Heart left ventricle (tissue), 16 donors: ENCODE measurements at regions of chr1 and their contacts with region 1.

Region 1: GRCh38 chr1:6784560-6785317 is 515 bp upstream of the CAMTA1 start:
- DNase-seq: peak; percentile 99 to 100 (median 100)
- ATAC-seq: peak; percentile 91 to 97 (median 96)
- H3K4me3 ChIP-seq: peak overlapping the region; percentile 29 to 96 (median 76)
- H3K27ac ChIP-seq: peak overlapping the region; percentile 91 to 100 (median 99)
- H3K4me1 ChIP-seq: peaks cover 3 to 50% (median 34%) of the 10 kb centered on the region in 12 donors
- H3K27me3 ChIP-seq: no peaks in the 10 kb centered on the region
- CTCF ChIP-seq: no peak
- POLR2A ChIP-seq: peak; percentile 22 to 66

Region 2: GRCh38 chr1:6613361-6614018 is 171.2 kb before region 1 on chr1 and contains the start of gene PHF13:
- intact Hi-C with region 1: loop called in 1 of 10 experiments (anchors 5 kb)
- DNase-seq: peak; percentile 99 to 100 (median 100)
- ATAC-seq: peak; percentile 96 to 100 (median 99)
- H3K4me3 ChIP-seq: peak within 1 kb of the TSS; percentile 68 to 100 (median 96)
- H3K27ac ChIP-seq: peak within 1 kb of the TSS; percentile 90 to 99 (median 98)
- H3K4me1 ChIP-seq: peaks cover 0 to 41% (median 20%) of the 10 kb centered on the region in 12 donors
- H3K27me3 ChIP-seq: no peaks in the 10 kb centered on the region
- CTCF ChIP-seq: peak in 1 of 12 donors; percentile 5
- POLR2A ChIP-seq: peak in 1 of 2 donors; percentile 49
- total RNA-seq, gene PHF13: 3.5 to 11.2 (median 7.9) TPM

Region 3: DNA sequence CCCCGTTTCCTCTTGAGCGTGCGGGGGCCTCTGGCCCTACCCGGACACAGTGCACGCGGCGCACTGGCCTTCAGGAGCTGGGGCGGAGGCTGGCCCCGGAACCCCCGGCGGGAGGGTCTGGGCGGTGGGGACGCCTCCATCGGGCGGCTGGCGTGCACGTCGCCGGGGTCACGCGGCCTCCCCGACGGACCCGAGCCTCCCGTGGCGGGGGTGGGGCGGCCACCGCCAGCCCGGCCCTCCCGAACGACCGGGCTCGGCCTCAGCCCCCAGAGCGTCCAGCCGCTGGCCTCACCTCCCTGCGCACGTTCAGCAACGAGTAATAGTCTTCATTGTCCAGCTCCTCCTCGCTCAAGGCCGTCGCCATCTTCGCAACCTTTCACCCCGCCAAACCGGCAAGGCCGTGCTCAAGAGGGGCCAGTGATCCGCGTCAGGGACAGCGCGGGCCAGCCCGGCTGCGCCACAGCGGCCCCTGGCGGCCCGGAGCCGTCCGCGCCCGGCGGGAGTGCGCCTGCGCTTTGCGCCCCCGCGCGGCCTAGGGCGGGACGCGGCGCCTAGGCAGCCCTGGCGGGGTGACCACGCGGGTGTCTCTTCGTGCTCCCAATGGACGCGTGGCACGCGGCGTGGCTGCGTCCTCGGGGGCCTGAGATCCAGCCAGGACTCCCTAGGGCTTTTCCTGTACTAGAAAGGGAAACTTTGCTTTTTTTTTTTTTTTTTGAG is 83.1 kb before region 1 on chr1 and contains the start of gene DNAJC11:
- intact Hi-C with region 1: loop called in 1 of 10 experiments (anchors 2 kb)
- DNase-seq: peak; percentile 90 to 95 (median 92)
- ATAC-seq: peak; percentile 89 to 98 (median 95)
- H3K4me3 ChIP-seq: peak within 1 kb of the TSS; percentile 68 to 100 (median 94)
- H3K27ac ChIP-seq: peak within 1 kb of the TSS; percentile 70 to 92 (median 87)
- H3K4me1 ChIP-seq: peaks cover 5 to 29% (median 19%) of the 10 kb centered on the region in 12 donors
- H3K27me3 ChIP-seq: no peaks in the 10 kb centered on the region
- CTCF ChIP-seq: peak; percentile 60 to 100 (median 93)
- POLR2A ChIP-seq: peak in 1 of 2 donors; percentile 34
- total RNA-seq, gene DNAJC11: 42.4 to 67.4 (median 61.2) TPM

Region 4: DNA sequence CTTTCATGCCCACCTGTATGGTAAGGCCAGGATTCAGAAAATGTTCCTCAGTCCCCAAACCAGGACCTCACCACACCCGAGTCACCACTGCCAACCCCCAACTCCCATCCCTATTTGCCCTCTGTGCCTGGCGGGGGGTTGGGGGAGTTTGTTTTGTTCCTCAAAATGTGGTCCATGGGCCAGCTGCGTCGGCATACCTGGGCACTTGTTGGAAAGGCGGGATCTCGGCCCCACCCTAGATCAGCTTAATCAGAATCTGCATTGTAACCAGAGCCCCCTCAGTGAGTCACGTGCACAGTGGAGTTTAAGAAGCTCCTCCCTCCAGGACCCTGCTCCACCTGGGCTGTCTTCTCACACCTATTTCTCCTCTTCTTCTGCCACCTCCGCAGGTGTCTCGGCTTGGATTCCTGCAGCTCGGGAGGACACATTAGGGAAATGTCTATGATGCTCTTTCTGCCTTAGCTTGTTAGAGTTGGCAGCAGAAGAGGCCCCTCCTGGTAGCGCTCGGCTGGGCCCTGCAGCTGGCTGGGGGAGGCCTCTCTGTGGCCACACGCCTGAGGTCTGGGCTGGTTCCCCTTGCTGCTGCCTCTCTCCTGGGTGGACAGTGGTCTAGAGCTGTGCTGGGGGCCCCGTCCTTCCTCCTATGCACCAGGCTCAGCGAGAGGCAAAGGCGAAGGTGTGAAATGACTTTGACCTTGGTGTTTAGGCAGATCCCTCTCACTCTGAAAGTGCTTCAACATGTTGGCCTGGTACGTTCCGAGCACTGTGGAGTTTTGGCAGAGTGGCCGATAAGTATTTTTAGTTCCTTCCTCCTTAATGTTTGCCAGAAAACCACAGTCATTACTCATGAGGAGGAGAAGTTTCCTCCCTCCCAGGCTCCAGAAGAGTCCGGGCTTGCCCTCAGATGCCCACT is 41.3 kb before region 1 on chr1:
- intact Hi-C with region 1: loop called in 2 of 10 experiments (anchors 2 to 5 kb)
- DNase-seq: peak; percentile 57 to 72 (median 63)
- ATAC-seq: peak; percentile 92 to 96 (median 95)
- H3K4me3 ChIP-seq: peak overlapping the region in 5 of 12 donors; percentile 3 to 28 (median 22)
- H3K27ac ChIP-seq: peak overlapping the region; percentile 78 to 89 (median 85)
- H3K4me1 ChIP-seq: peaks cover 0 to 22% (median 15%) of the 10 kb centered on the region in 12 donors
- H3K27me3 ChIP-seq: no peaks in the 10 kb centered on the region
- CTCF ChIP-seq: no peak
- POLR2A ChIP-seq: no peak